Activated B cell treated with CpG ODN at 0.5 μM for 24 hours (primary cell): ENCODE measurements at regions of chr10 and their contacts with region 1.

Region 1: GRCh38 chr10:3805791-3806461 is 20.9 kb upstream of the KLF6 start:
- DNase-seq: peak; percentile 47
- ATAC-seq: peak; percentile 69
- H3K4me3 Mint-ChIP-seq: peak overlapping the region; percentile 73
- H3K27ac Mint-ChIP-seq: peak overlapping the region; percentile 92
- H3K4me1 Mint-ChIP-seq: peaks cover 69% of the 10 kb centered on the region
- H3K27me3 Mint-ChIP-seq: no peaks in the 10 kb centered on the region
- CTCF ChIP-seq: no peak

Region 2: DNA sequence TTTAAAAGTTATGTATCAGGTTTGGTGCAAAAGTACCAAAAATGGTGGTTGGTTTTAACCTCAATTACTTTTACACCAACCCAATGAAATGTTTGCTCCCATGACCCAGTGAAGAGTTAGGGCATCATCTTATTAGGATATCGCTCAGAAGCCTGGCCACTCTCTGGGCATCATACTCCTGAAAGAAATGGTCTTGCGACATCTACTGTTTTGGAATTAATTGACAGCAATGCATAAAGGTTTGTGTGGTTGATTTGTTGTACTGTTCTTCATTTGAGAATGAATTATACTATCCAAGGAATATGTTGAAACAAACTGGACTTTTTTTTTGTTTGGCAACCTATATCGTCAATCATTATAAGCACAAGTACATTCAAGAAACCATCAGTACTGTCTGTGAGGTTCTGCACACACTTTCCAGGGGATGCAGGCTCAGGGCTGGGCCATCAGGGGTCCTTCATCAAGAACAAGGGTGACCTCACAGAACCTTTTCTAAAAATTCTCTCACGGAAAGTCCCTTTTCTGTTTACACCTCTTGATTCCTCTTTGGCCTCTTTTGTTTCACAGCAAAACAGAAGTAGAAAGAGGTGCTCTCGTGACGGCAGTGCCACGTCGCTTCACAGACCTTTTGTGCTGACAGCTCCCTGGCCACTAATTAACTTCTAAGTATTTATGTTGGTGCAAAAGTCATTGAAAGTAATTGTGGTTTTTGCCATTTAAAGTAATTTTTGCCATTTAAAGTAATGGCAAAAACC is 96.3 kb after region 1 on chr10:
- CTCF ChIA-PET with region 1: no interaction called
- POLR2A ChIA-PET with region 1: no interaction called
- intact Hi-C with region 1: loop called (anchors 1 kb)
- DNase-seq: peak; percentile 30
- ATAC-seq: peak; percentile 87
- H3K4me3 Mint-ChIP-seq: peak overlapping the region; percentile 58
- H3K27ac Mint-ChIP-seq: peak overlapping the region; percentile 87
- H3K4me1 Mint-ChIP-seq: peaks cover 54% of the 10 kb centered on the region
- H3K27me3 Mint-ChIP-seq: no peaks in the 10 kb centered on the region
- CTCF ChIP-seq: no peak

Region 3: DNA sequence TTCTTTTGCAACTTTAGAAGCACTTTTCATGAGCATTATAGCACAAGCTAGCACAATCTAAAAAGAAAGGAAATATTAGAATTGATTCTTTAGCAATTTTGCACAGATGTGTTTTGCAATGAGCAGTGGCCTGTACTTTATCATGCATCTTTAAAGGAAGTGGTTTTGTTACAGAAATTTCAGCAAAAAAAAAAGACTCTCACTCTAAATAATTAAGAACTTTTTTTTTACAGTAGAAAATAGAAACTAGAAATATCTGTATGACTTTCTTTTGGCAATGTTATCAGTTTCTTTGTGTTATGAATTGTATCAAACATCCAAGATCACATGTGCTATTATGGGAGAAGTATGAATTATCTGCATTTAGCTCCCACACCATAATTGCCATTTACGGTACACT is 174.7 kb after region 1 on chr10:
- CTCF ChIA-PET with region 1: no interaction called
- POLR2A ChIA-PET with region 1: no interaction called
- intact Hi-C with region 1: no loop called
- DNase-seq: no peak
- ATAC-seq: no peak
- H3K4me3 Mint-ChIP-seq: no peak overlapping the region
- H3K27ac Mint-ChIP-seq: no peak overlapping the region
- H3K4me1 Mint-ChIP-seq: peaks cover 17% of the 10 kb centered on the region
- H3K27me3 Mint-ChIP-seq: no peaks in the 10 kb centered on the region
- CTCF ChIP-seq: no peak